ENCODE measurements at regions of chr13 and their contacts with region 1.

Region 1: GRCh38 chr13:69324090-69324886 is 783.3 kb upstream of the ATXN8OS start:
- DNase-seq: no peak
- H3K4me3 ChIP-seq: no peak overlapping the region
- H3K27ac ChIP-seq: no peak overlapping the region
- H3K4me1 ChIP-seq: no peaks in the 10 kb centered on the region
- H3K27me3 ChIP-seq: no peaks in the 10 kb centered on the region
- CTCF ChIP-seq: no peak
- POLR2A ChIP-seq: no peak

Region 2: GRCh38 chr13:67736646-67737420 is 1587.5 kb before region 1 on chr13:
- CTCF ChIA-PET with region 1: no interaction called
- POLR2A ChIA-PET with region 1: no interaction called
- dilution Hi-C with region 1: no loop called
- intact Hi-C with region 1: loop called (anchors 5 kb)
- DNase-seq: no peak
- H3K4me3 ChIP-seq: no peak overlapping the region
- H3K27ac ChIP-seq: no peak overlapping the region
- H3K4me1 ChIP-seq: no peaks in the 10 kb centered on the region
- H3K27me3 ChIP-seq: no peaks in the 10 kb centered on the region
- CTCF ChIP-seq: no peak
- POLR2A ChIP-seq: no peak

Region 3: GRCh38 chr13:68304286-68304893 is 1019.9 kb before region 1 on chr13:
- CTCF ChIA-PET with region 1: no interaction called
- POLR2A ChIA-PET with region 1: no interaction called
- dilution Hi-C with region 1: no loop called
- intact Hi-C with region 1: loop called (anchors 1 kb)
- DNase-seq: peak; percentile 14
- H3K4me3 ChIP-seq: no peak overlapping the region
- H3K27ac ChIP-seq: no peak overlapping the region
- H3K4me1 ChIP-seq: no peaks in the 10 kb centered on the region
- H3K27me3 ChIP-seq: no peaks in the 10 kb centered on the region
- CTCF ChIP-seq: peak; percentile 35 to 42
- POLR2A ChIP-seq: no peak